ENCODE measurements at regions of chr4 and their contacts with region 1.

Region 1: GRCh38 chr4:127732613-127733328 is 2.6 kb downstream of the SLC25A31 start:
- DNase-seq: no peak
- ATAC-seq: peak; percentile 19

Region 2: GRCh38 chr4:127604949-127605709 is 127.6 kb before region 1 on chr4:
- intact Hi-C with region 1: loop called (anchors 1 kb)
- DNase-seq: no peak
- ATAC-seq: no peak

Measured in left ventricle myocardium superior (tissue), 1 donor.